Mammary epithelial cell (primary cell): ENCODE measurements at regions of chr2 and their contacts with region 1.

Region 1: GRCh38 chr2:112645310-112646101 is at the start of gene SLC20A1:
- DNase-seq: peak; percentile 96
- H3K4me3 ChIP-seq: peak within 1 kb of the TSS; percentile 84 to 93 (median 85)
- H3K27ac ChIP-seq: peak within 1 kb of the TSS; percentile 94
- H3K4me1 ChIP-seq: peaks cover 51% of the 10 kb centered on the region
- H3K27me3 ChIP-seq: no peaks in the 10 kb centered on the region
- CTCF ChIP-seq: peak; percentile 21 to 40
- total RNA-seq, gene SLC20A1: 227 to 533 TPM

Region 2: GRCh38 chr2:112692496-112692911 is 47.0 kb after region 1 on chr2:
- CTCF ChIA-PET with region 1: no interaction called
- dilution Hi-C with region 1: loop called (anchors 5 kb)
- in situ Hi-C with region 1: no loop called
- intact Hi-C with region 1: loop called (anchors 1 kb)
- DNase-seq: peak; percentile 100
- H3K4me3 ChIP-seq: no peak overlapping the region
- H3K27ac ChIP-seq: peak overlapping the region; percentile 97
- H3K4me1 ChIP-seq: peaks cover 34% of the 10 kb centered on the region
- H3K27me3 ChIP-seq: no peaks in the 10 kb centered on the region
- CTCF ChIP-seq: no peak

Region 3: DNA sequence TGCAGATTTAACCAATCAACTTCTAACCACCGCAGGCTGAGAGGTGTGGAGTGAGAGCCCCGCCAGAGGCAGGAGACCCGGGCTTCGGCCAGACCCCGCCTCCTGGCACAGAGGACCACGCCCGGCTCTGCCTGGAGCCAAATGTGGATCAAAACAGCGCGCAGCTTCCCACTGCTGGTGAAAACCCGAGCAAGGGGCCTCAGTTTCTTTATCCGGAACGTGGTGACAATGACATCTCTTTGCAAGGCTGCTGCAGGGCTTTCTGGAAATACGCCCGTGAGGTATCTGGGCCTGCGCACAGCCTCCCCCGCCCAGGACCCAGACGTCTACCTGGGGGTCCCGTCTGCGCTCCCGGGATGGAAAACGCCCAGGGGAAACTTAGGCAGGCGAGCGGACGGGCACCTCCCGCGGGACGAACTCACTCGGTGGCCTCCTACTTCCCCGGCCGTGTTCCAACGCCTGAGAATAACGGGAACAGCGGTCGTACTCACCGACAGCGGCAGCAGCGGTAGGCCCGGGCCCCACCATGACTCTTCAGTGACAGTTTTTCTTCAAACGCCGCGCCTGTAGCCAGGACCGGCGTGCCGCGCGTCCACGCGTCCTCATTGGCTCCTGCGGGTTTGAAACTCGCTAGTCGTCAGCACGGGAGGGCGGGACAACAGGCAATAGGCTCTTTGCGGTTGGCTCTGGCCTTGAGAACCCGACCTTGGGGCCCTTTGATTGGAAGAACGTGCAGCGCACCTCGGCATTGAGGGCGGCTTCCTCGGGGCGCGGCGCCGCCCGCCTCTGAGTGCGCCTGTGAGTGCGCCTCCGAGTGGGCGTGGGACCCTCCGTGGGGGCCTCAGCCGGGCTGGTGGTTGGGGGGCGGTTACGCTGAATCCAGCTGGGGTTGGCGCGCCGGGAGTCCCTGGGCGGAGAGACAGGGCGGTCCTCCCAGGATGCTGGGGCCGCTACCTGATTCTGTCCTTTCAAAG is 118.9 kb after region 1 on chr2 and contains the start of gene CKAP2L:
- CTCF ChIA-PET with region 1: no interaction called
- dilution Hi-C with region 1: no loop called
- in situ Hi-C with region 1: no loop called
- intact Hi-C with region 1: no loop called
- DNase-seq: peak; percentile 98
- H3K4me3 ChIP-seq: peak within 1 kb of the TSS; percentile 70 to 79 (median 76)
- H3K27ac ChIP-seq: peak within 1 kb of the TSS; percentile 84
- H3K4me1 ChIP-seq: peaks cover 28% of the 10 kb centered on the region
- H3K27me3 ChIP-seq: no peaks in the 10 kb centered on the region
- CTCF ChIP-seq: no peak
- total RNA-seq, gene CKAP2L: 0.83 to 32.7 TPM

Region 4: GRCh38 chr2:114022360-114023085 is 1377.0 kb after region 1 on chr2:
- CTCF ChIA-PET with region 1: interaction called, 30 read pairs
- dilution Hi-C with region 1: no loop called
- in situ Hi-C with region 1: no loop called
- intact Hi-C with region 1: no loop called
- DNase-seq: peak; percentile 94
- H3K4me3 ChIP-seq: no peak overlapping the region
- H3K27ac ChIP-seq: peak overlapping the region; percentile 66
- H3K4me1 ChIP-seq: peaks cover 16% of the 10 kb centered on the region
- H3K27me3 ChIP-seq: no peaks in the 10 kb centered on the region
- CTCF ChIP-seq: no peak